ENCODE measurements at regions of chr22 and their contacts with region 1.

Region 1: DNA sequence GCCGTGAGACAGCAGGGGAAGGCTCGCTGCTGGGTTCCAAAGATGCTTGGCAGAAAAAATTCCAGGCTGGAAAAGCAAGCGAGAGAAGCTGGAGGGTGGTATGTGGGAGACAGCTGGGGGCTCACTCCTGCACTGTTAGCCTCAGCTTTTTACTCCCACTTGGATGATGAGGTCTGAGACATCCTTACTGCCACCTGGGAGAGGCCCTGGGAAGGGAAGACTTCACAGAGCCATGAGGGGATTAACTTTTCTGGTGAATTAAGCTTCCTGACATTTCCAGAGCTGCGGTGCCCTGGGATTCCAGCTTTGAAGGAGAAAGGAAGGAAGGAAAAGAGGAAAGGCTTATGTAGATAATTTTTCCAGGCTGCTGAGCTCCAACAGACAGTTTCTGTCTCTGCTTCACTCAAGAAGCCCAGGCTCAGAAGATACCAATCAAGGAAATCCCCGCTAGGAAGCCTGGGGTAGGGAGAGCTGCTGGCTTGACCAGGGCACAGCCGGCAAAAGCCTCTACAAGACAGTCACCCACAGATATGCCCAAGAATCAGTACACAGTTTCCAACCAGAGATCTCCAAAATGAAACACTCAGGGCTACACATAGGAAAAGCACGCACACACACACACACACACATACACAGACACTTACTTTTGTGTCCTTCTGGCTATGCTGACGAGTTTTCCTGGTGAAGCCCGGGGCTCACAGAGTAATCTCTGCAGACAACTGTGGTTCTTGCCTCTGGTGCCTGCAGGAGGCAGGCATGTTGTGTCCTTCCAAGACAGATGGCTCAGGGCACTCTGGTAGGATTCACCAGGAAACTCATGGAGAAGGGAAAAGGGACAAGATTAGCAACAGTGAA is 907 bp downstream of the MCHR1 start:
- DNase-seq: no peak
- ATAC-seq: no peak
- H3K4me3 ChIP-seq: no peak overlapping the region
- H3K27ac ChIP-seq: no peak overlapping the region
- H3K4me1 ChIP-seq: peaks cover 8% of the 10 kb centered on the region
- H3K27me3 ChIP-seq: no peaks in the 10 kb centered on the region
- CTCF ChIP-seq: no peak

Region 2: GRCh38 chr22:40593460-40594273 is 86.5 kb before region 1 on chr22:
- CTCF ChIA-PET with region 1: no interaction called
- POLR2A ChIA-PET with region 1: no interaction called
- intact Hi-C with region 1: no loop called
- DNase-seq: no peak
- ATAC-seq: no peak
- H3K4me3 ChIP-seq: no peak overlapping the region
- H3K27ac ChIP-seq: no peak overlapping the region
- H3K4me1 ChIP-seq: peaks cover 38% of the 10 kb centered on the region
- H3K27me3 ChIP-seq: no peaks in the 10 kb centered on the region
- CTCF ChIP-seq: no peak

Region 3: DNA sequence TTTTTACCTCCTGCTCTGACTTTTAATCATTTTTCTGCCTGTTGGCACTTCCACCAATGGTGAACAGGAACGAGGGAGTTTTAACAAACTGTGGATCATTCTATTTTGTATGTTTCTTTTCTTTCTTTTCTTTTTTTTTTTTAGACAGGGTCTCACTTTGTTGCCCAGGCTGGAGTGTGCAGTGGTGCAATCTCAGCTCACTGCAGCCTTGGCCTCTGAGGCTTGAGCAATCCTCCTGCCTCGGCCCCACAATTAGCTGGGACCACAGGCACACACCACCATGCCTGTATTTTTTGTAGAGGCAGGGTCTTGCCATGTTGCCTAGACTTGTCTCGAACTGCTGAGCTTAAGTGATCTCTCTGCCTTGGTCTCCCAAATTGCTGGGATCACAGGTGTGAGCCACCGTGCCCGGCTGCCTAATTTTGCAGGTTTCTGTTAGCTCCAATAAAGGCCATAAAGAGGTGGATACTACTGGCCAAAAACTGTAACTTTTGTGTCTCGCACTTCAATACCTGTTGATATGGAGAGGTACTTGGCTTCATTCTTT is 79.2 kb after region 1 on chr22:
- CTCF ChIA-PET with region 1: interaction called, 46 read pairs
- POLR2A ChIA-PET with region 1: no interaction called
- intact Hi-C with region 1: loop called (anchors 1 kb)
- DNase-seq: no peak
- ATAC-seq: no peak
- H3K4me3 ChIP-seq: no peak overlapping the region
- H3K27ac ChIP-seq: no peak overlapping the region
- H3K4me1 ChIP-seq: peaks cover 25% of the 10 kb centered on the region
- H3K27me3 ChIP-seq: no peaks in the 10 kb centered on the region
- CTCF ChIP-seq: no peak

Region 4: GRCh38 chr22:40764763-40765441 is 84.7 kb after region 1 on chr22:
- CTCF ChIA-PET with region 1: interaction called, 46 read pairs
- POLR2A ChIA-PET with region 1: no interaction called
- intact Hi-C with region 1: loop called (anchors 1 kb)
- DNase-seq: no peak
- ATAC-seq: no peak
- H3K4me3 ChIP-seq: no peak overlapping the region
- H3K27ac ChIP-seq: no peak overlapping the region
- H3K4me1 ChIP-seq: no peaks in the 10 kb centered on the region
- H3K27me3 ChIP-seq: no peaks in the 10 kb centered on the region
- CTCF ChIP-seq: no peak

Region 5: GRCh38 chr22:40898850-40899357 is 218.7 kb after region 1 on chr22:
- CTCF ChIA-PET with region 1: interaction called, 13 read pairs
- POLR2A ChIA-PET with region 1: no interaction called
- intact Hi-C with region 1: loop called (anchors 10 kb)
- DNase-seq: peak; percentile 65
- ATAC-seq: peak; percentile 64
- H3K4me3 ChIP-seq: no peak overlapping the region
- H3K27ac ChIP-seq: no peak overlapping the region
- H3K4me1 ChIP-seq: no peaks in the 10 kb centered on the region; the same call in 1 of the 2 replicates
- H3K27me3 ChIP-seq: no peaks in the 10 kb centered on the region
- CTCF ChIP-seq: peak; percentile 70